Psoas muscle (tissue), 8 donors: ENCODE measurements at regions of chr19 and their contacts with region 1.

Region 1: DNA sequence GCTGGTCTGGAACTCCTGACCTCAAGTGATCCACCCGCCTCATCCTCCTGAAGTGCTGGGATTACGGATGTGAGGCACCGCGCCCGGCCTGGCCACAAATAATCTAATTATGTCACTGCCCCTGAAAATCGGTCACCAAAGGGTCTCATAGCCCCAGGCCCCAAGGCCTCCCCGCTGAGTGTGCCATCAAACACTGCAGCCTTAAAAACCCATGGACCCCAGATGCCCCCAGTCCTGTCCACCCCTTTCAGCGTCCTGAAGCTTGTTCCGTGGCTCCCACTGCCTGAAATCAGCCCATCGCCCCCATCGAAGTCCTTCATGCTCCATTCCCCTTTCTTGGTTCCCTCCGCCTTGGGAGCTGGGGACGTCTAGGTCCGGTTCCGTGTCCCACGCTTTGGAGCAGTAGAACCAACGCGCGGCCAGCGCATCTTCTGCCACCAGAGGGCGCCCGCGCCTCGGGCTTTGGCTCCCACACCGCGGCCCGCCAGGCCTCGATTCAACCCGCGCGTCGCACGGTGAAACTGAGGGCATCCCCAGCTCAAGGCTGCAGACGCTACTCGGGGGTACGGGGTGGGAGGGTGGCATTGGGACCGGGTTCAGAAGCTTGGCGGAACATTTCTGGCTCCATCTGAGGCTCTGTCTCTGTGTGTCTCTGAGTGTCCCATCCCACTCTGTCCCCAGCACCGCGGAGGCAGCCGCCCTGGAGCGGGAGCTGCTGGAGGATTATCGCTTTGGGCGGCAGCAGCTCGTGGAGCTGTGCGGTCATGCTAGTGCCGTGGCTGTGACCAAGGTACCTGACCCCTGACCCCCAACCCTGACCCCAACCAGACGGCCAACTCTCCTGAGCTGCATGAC is 3.5 kb downstream of the YJEFN3 start:
- DNase-seq: peak; percentile 84 to 91
- ATAC-seq: peak; percentile 72 to 84 (median 74)
- H3K4me3 ChIP-seq: no peak overlapping the region
- H3K27ac ChIP-seq: no peak overlapping the region
- H3K4me1 ChIP-seq: peaks cover 4% of the 10 kb centered on the region
- H3K27me3 ChIP-seq: peaks cover 0 to 6% (median 2%) of the 10 kb centered on the region in 3 donors
- CTCF ChIP-seq: peak; percentile 95

Region 2: GRCh38 chr19:19488875-19489690 is 43.1 kb before region 1 on chr19:
- intact Hi-C with region 1: no loop called
- DNase-seq: peak; percentile 69 to 88
- ATAC-seq: peak; percentile 16 to 45 (median 32)
- H3K4me3 ChIP-seq: peak overlapping the region; percentile 30
- H3K27ac ChIP-seq: peak overlapping the region; percentile 67
- H3K4me1 ChIP-seq: peaks cover 39% of the 10 kb centered on the region
- H3K27me3 ChIP-seq: no peaks in the 10 kb centered on the region
- CTCF ChIP-seq: no peak

Region 3: GRCh38 chr19:19643158-19644053 is 111.2 kb after region 1 on chr19 and contains the start of gene GMIP:
- intact Hi-C with region 1: loop called (anchors 2 to 5 kb)
- DNase-seq: peak; percentile 72 to 82
- ATAC-seq: peak; percentile 65 to 83 (median 73)
- H3K4me3 ChIP-seq: peak within 1 kb of the TSS; percentile 76
- H3K27ac ChIP-seq: no peak within 1 kb of the TSS
- H3K4me1 ChIP-seq: no peaks in the 10 kb centered on the region
- H3K27me3 ChIP-seq: peaks cover 0 to 2% (median 0%) of the 10 kb centered on the region in 3 donors
- CTCF ChIP-seq: peak; percentile 79
- total RNA-seq, gene GMIP: 1.4 to 2.3 (median 1.8) TPM

Region 4: DNA sequence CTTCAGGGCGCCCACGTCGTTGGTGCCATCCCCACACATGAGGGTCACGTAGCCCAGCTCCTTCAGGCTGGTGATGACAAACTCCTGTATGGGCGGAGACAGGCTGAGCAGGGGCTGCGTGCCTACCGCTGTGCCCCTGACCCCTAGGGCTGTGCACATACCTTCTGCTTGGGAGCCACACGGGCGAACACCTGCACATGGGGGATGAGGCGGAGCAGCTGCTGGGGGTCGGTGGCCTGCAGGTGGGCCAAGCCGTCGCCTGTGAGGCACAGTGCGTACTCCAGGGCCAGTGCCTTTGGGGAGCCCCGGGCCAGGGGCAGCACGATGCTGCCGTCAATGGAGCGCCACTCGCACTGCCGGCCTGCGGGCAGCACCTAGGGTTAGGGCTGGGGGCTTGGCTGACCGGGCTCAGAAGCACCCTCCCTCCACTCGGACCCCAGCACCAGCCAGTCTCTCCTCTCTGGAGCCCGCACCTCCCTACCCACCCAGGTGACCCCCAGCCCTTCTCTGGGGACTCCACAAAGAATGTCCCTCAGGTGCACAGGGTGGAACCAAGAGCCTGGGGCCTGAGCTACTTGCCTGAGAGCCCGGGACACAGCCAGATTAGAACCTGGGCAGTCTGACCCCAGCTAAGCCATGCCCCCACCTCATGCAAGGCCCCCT is 117.5 kb after region 1 on chr19:
- intact Hi-C with region 1: loop called in 1 of 2 experiments (anchors 5 kb)
- DNase-seq: no peak
- ATAC-seq: no peak
- H3K4me3 ChIP-seq: no peak overlapping the region
- H3K27ac ChIP-seq: no peak overlapping the region
- H3K4me1 ChIP-seq: no peaks in the 10 kb centered on the region
- H3K27me3 ChIP-seq: no peaks in the 10 kb centered on the region
- CTCF ChIP-seq: no peak

Region 5: GRCh38 chr19:19956434-19957075 is 424.4 kb after region 1 on chr19:
- intact Hi-C with region 1: loop called (anchors 2 to 5 kb)
- DNase-seq: no peak
- ATAC-seq: no peak
- H3K4me3 ChIP-seq: no peak overlapping the region
- H3K27ac ChIP-seq: no peak overlapping the region
- H3K4me1 ChIP-seq: no peaks in the 10 kb centered on the region
- H3K27me3 ChIP-seq: peaks cover 0 to 2% (median 0%) of the 10 kb centered on the region in 3 donors
- CTCF ChIP-seq: no peak

Region 6: GRCh38 chr19:19964416-19964815 is 432.2 kb after region 1 on chr19:
- intact Hi-C with region 1: loop called (anchors 2 to 5 kb)
- DNase-seq: no peak
- ATAC-seq: no peak
- H3K4me3 ChIP-seq: no peak overlapping the region
- H3K27ac ChIP-seq: no peak overlapping the region
- H3K4me1 ChIP-seq: no peaks in the 10 kb centered on the region
- H3K27me3 ChIP-seq: peaks cover 0 to 1% (median 0%) of the 10 kb centered on the region in 3 donors
- CTCF ChIP-seq: no peak